ENCODE measurements at regions of chr17 and their contacts with region 1.

Region 1: DNA sequence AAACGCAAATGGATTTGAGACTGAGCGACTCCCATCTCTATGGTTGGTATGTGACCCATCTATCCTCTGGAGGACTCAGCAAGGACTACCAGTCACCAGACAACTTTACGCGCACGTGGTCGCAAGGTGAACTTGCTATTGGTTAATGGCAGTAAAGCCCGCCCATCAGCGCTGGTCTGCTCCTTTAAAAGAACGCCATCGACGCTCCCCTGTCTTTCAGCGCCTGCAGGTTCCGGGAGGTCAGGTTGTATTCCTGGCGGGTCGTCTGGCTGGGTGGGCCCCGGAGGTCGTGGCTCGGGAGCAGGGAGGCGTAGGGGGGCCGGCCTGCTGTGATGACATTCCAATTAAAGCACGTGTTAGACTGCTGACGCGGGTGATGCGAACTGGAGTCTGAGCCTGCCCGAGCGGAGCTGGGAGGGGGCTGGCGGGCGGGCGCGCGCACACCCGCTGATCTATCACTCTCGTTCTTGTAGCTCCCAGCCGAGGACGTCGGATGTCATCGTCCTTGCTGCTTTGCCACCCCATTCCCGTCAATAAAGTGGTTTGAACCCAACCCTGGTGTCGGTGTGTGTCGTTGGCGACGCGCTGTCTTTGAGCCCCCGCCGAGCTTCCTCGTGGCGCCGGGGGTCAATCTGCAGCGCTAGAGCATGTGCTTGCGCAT is 15.9 kb upstream of the ERN1 start:
- DNase-seq: peak; percentile 91 to 93
- H3K4me3 ChIP-seq: peak overlapping the region; percentile 79 to 91 (median 82)
- H3K27ac ChIP-seq: peak overlapping the region; percentile 95
- H3K4me1 ChIP-seq: peaks cover 0 to 9% (median 3%) of the 10 kb centered on the region in 4 experiments; a peak in 5 of 7 replicates
- H3K27me3 ChIP-seq: no peaks in the 10 kb centered on the region
- CTCF ChIP-seq: no peak
- EP300 ChIP-seq: no peak; a peak in 1 of 3 replicates
- POLR2A ChIP-seq: peak; percentile 98 to 100
- RAD21 ChIP-seq: no peak

Region 2: GRCh38 chr17:64025732-64026294 is 120.1 kb before region 1 on chr17:
- CTCF ChIA-PET with region 1: no interaction called
- POLR2A ChIA-PET with region 1: interaction called, 16 read pairs
- DNase-seq: peak; percentile 70 to 85
- H3K4me3 ChIP-seq: peak overlapping the region in 1 of 4 experiments; percentile 20; a peak in 1 of 8 replicates
- H3K27ac ChIP-seq: no peak overlapping the region
- H3K4me1 ChIP-seq: no peaks in the 10 kb centered on the region; a peak in 1 of 7 replicates
- H3K27me3 ChIP-seq: peaks cover 0 to 4% (median 1%) of the 10 kb centered on the region in 4 experiments; a peak in 3 of 7 replicates
- CTCF ChIP-seq: peak; percentile 94 to 99 (median 99)
- EP300 ChIP-seq: peak in 1 of 2 experiments; percentile 34; a peak in 1 of 3 replicates
- POLR2A ChIP-seq: no peak
- RAD21 ChIP-seq: peak; percentile 71 to 78

Region 3: DNA sequence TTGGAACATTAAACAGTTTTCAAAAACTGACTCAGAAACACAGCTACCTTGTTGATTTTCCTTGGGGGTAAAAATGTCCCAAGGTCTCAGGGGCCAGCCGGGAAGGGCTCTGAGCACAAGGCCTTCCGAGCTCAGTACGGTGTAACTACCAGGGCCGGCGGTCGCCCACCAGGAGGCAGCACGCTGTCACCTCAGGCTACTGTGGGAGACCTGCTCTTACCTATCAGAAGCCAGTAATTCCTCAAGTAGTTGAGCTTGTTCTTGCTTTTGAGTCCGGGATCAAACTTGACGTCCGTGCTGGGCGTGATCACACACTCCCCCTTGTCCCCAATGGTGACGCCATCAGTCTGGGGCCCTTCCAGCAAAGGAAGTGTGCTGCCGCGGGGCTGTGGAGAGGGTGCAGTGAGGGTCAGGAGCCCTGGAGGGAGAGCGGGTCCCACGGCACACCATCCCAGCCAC is 82.1 kb before region 1 on chr17:
- CTCF ChIA-PET with region 1: interaction called, 238 read pairs
- POLR2A ChIA-PET with region 1: interaction called, 23 read pairs
- DNase-seq: peak; percentile 43 to 82
- H3K4me3 ChIP-seq: peak overlapping the region in 1 of 4 experiments; percentile 35; a peak in 2 of 8 replicates
- H3K27ac ChIP-seq: no peak overlapping the region
- H3K4me1 ChIP-seq: peaks cover 0 to 3% (median 0%) of the 10 kb centered on the region in 4 experiments; a peak in 1 of 7 replicates
- H3K27me3 ChIP-seq: no peaks in the 10 kb centered on the region
- CTCF ChIP-seq: peak; percentile 90 to 93 (median 92)
- EP300 ChIP-seq: no peak
- POLR2A ChIP-seq: 0 out of 3 replicates have a peak, but pooled peaks of 1 of the 2 experiments have one; percentile 30
- RAD21 ChIP-seq: peak; percentile 89 to 90

Region 4: DNA sequence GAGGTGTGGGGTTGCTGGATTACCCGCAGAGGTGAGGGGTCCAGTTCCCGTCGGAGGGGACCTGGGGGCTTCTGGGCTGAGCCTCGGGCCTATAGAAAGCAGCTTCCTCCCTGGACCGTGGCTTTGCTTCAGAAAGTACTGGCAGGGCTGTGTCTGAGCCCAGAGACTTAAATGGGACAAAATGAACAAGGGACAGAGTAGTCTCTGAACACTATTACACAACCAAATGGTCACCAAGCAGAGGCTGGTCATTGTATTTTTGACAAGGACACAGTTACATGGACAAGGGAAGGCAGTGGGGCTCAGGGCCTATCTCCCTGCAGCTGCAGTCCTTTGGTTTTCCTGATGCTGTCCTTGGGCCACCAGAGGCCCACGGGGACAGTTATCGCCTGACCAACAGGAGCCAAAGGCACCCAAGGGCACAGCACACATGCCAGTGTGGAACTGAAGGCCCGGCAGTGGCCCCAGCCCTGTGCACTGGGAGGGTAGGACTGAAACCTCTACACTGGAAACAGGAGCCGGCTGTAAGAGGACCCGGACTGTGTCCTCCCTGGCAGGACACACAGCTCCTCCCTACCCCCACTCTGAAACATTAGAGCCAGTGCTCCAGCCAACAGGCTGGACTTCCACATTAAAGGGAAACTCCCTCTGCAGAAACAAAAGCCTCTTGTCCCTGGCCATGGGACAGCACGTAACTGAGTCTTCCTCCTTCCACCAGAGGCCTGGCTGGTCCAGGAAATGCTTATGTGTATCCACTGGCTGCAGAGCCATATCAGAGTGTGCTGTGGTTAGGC is 10.1 kb after region 1 on chr17:
- CTCF ChIA-PET with region 1: interaction called, 4 read pairs
- POLR2A ChIA-PET with region 1: interaction called, 193 read pairs
- DNase-seq: no peak
- H3K4me3 ChIP-seq: no peak overlapping the region
- H3K27ac ChIP-seq: no peak overlapping the region
- H3K4me1 ChIP-seq: peaks cover 0 to 6% (median 3%) of the 10 kb centered on the region in 4 experiments; a peak in 3 of 7 replicates
- H3K27me3 ChIP-seq: no peaks in the 10 kb centered on the region
- CTCF ChIP-seq: no peak
- EP300 ChIP-seq: no peak
- POLR2A ChIP-seq: no peak
- RAD21 ChIP-seq: no peak

Region 5: DNA sequence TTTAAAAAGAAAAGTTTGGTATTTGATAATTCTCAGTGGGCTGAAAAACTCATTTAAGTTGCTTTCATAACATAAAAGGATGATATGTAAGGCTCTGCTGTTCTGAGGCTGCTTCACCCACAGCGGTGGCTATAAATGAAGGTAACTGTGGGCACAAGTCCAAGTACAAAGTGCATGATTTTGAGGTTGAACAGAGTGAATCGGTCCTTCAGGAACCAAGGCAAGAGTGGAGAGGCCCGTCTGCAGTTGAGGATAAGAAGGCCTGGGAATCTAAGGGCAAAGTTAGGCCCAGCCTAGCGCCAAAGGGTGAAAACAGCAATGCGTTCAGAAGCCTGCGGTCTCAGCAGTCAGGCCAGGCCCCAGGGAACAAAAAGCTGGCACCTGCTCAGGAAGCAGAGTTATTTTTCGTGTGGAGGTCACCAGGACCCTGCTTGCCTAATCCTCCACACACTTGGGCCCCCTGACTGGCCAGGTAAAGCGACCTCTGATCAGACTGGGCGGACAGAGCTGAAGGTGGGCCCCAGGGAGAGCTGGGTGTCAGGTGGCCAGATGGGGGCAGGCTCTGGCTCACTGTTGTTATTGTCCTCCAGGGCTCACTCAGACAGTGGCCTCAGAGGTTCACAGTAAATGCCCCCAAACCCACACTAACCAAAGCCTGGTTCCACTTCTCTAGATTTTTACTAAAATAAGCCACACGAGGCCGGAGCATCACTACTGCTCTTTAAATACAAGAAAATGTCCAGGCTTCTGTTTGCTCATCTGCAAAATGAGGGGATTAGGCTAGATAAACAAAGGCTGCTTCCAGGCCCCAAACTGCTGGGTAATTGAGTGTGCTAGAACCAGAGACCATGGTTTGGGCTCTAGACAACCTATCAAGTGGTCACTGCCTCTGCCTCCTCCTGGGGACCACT is 70.7 kb after region 1 on chr17:
- CTCF ChIA-PET with region 1: no interaction called
- POLR2A ChIA-PET with region 1: interaction called, 21 read pairs
- DNase-seq: peak in 1 of 2 experiments; percentile 55
- H3K4me3 ChIP-seq: no peak overlapping the region
- H3K27ac ChIP-seq: no peak overlapping the region; the same call in 1 of the 2 replicates
- H3K4me1 ChIP-seq: peaks cover 0 to 8% (median 6%) of the 10 kb centered on the region in 4 experiments; a peak in 6 of 7 replicates
- H3K27me3 ChIP-seq: no peaks in the 10 kb centered on the region
- CTCF ChIP-seq: peak; percentile 35 to 54 (median 46)
- EP300 ChIP-seq: no peak
- POLR2A ChIP-seq: no peak
- RAD21 ChIP-seq: peak; percentile 25 to 39; a peak in 2 of 4 replicates

Region 6: DNA sequence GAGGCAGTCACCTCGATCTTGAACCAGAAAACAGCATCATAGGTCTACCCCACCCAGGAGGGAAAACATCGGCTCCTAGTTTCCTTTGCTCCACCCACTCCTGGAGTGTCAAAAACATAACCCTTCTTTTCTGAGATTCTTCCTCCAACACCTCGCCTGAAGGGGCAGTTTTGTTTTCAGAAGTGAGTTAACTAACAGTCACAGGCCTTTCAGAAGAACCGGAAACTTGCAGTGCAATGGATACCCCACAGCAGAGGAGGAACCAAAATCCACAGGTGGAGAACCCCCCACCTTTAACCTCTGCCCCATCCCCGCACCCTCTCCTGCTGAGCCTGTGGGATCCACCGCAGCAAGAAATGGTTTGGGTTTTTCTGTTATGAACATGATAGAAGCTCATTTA is 125.0 kb after region 1 on chr17:
- CTCF ChIA-PET with region 1: interaction called, 3 read pairs
- POLR2A ChIA-PET with region 1: interaction called, 38 read pairs
- DNase-seq: no peak
- H3K4me3 ChIP-seq: no peak overlapping the region
- H3K27ac ChIP-seq: no peak overlapping the region
- H3K4me1 ChIP-seq: peaks cover 0 to 3% (median 0%) of the 10 kb centered on the region in 4 experiments; a peak in 1 of 7 replicates
- H3K27me3 ChIP-seq: no peaks in the 10 kb centered on the region
- CTCF ChIP-seq: no peak
- EP300 ChIP-seq: no peak
- POLR2A ChIP-seq: no peak
- RAD21 ChIP-seq: no peak

Region 7: DNA sequence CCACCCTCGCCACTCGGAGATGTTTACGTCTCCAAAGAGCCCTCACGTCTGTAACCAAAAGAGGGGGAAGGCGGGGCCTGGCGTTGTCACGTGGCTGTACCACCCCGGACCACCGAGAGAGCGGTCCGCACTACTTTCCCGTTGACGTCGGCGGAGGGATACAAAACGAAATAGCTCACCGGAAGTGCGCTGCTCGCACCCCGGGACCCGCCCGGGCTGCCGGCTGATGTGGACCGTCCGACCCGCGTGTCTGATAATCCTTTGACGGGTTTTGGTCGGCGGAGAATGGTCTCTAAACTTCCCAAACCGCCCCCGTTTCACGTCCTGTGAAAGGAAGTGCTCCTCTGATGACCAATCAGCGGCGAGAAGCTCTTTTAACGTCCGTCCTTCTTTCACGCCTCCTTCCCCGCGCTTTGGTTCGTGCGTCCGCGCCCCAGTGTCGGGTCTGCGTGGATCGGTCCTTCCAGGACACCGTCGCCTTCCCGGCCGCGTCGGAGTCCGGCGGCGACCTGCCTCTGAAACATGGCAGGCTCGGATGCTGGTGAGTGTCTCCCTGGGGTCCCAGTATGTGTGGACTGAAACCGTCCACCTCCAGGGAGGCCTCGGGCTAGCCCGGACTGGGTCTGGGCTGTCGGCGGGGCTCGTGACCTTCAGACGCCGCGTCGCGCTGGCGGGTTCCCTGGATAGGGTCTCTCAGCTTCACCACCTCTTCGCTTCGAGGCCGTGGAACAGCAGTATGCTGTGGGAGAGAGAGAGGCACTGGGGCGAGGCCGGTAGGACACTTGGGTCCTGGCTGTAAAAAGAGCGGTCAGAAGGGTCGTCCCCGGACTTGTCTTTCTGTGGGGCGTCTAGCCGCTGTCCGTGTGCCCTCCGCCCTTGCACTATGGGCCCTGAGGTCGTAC is 360.9 kb after region 1 on chr17 and contains the start of gene CEP95:
- CTCF ChIA-PET with region 1: no interaction called
- POLR2A ChIA-PET with region 1: interaction called, 18 read pairs
- DNase-seq: peak in 1 of 2 experiments; percentile 95
- H3K4me3 ChIP-seq: peak within 1 kb of the TSS; percentile 95 to 99 (median 98)
- H3K27ac ChIP-seq: peak within 1 kb of the TSS; percentile 99
- H3K4me1 ChIP-seq: peaks cover 0 to 11% (median 2%) of the 10 kb centered on the region in 4 experiments; a peak in 5 of 7 replicates
- H3K27me3 ChIP-seq: no peaks in the 10 kb centered on the region
- CTCF ChIP-seq: no peak; a peak in 1 of 4 replicates
- EP300 ChIP-seq: peak; percentile 34 to 85
- POLR2A ChIP-seq: no peak; a peak in 2 of 3 replicates
- RAD21 ChIP-seq: peak in 1 of 2 experiments; percentile 2; a peak in 1 of 4 replicates
- total RNA-seq, gene CEP95: 50.8 and 51.5 TPM in 2 replicates

Measured in H1 (cell line).